ENCODE measurements at regions of chr2 and their contacts with region 1.

Region 1: DNA sequence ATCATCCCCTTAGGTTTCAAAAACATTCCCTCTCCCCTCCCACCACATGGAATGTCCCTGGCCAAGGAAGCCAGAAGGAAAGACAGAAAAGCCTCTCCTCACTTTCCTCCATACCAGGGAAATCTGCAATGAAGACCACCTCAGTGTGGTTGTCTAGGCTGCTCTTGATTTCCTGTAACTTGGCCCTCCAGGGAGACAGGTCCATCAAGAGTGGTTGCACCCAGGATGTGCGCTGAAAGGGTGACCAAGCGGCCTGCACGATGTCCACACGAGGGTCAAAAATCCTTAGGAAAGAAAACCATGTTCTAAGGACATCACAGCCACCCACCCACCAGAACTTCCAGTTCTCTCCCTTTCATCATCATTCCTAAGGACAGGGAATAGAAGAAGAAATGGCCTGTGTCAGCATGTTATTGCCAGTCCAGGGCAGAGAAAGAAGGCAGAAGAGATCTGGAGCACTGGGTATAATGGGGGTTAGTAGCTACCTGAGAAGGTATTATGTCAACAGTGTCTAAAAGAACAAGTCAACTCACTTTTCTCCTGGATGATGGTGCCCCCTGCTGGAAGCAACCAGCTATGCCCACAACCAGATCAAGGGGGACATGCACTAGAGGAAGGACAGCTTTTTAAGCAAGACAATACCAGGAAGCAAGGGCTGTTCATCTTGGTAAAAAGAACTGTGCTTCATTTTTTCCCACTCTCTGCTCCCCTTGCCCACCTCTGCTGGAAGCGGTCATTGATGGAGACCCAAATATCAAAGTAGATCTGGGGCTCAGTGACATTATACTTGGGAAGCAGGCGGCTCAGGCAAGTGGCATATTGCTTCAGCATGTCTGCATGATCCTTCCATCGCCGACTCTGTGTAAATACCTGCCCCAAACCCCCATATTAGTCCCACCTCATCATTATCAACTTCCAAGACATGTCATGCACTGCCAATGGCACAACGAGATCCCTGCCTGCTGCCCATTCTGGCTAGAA is 9.3 kb downstream of the GGCX start:
- DNase-seq: peak; percentile 91
- ATAC-seq: peak; percentile 77
- H3K4me3 Mint-ChIP-seq: no peak overlapping the region
- H3K27ac Mint-ChIP-seq: no peak overlapping the region
- H3K4me1 Mint-ChIP-seq: peaks cover 5% of the 10 kb centered on the region
- H3K27me3 Mint-ChIP-seq: no peaks in the 10 kb centered on the region
- CTCF ChIP-seq: peak; percentile 88

Region 2: DNA sequence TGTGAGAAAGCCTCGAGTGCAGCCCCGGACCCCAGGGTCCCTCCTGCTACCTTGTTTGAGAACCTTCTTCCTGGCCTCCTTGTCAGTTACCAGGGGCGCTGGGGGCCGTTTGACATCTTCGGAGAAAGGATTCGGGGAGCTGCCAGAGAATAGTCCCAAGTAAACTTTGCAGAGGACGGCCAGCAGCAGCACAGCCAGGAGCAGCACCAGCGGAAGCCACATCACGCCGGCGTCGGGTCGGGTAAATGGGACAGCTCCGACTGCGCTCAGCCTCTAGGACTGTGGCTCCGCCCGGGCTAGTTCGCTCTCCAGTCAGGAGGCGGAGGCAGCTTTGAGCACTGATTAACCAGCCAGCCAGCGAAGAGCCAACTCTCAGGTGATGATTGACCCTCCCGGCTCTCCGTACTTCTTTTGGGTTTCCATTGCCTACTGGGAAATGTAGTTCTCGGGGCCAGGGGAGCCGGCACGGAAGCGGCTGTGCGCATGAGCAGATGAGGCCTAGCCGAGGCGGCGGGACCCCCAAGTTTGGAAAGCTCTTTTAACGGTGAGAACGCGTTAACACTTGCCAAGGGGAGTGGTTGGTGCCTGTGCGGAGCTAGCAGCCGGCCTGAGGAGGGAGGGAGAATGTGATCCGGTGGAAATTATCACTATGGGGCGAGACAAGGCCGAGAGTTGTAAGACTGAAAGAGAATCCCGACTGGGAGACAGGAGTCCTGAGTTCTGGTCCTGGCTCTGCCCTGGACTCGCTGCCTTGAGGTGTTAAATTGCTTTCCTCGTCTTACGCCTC is 197.5 kb before region 1 on chr2 and contains the starts of genes ELMOD3 and RETSAT:
- CTCF ChIA-PET with region 1: interaction called, 10 read pairs
- POLR2A ChIA-PET with region 1: no interaction called
- DNase-seq: peak; percentile 95
- ATAC-seq: peak; percentile 99
- H3K4me3 Mint-ChIP-seq: peak within 1 kb of the TSS; percentile 100
- H3K27ac Mint-ChIP-seq: peak within 1 kb of the TSS; percentile 96
- H3K4me1 Mint-ChIP-seq: peaks cover 16% of the 10 kb centered on the region
- H3K27me3 Mint-ChIP-seq: no peaks in the 10 kb centered on the region
- CTCF ChIP-seq: no peak
- total RNA-seq, gene ELMOD3: 9.7 to 10.8 TPM (median 10.6 TPM) in 3 replicates
- total RNA-seq, gene RETSAT: 18.9 to 24.4 TPM (median 21.6 TPM) in 3 replicates

Region 3: GRCh38 chr2:85390941-85391669 is 160.9 kb before region 1 on chr2:
- CTCF ChIA-PET with region 1: interaction called, 66 read pairs
- POLR2A ChIA-PET with region 1: no interaction called
- DNase-seq: peak; percentile 94
- ATAC-seq: peak; percentile 89
- H3K4me3 Mint-ChIP-seq: no peak overlapping the region
- H3K27ac Mint-ChIP-seq: no peak overlapping the region
- H3K4me1 Mint-ChIP-seq: peaks cover 22% of the 10 kb centered on the region
- H3K27me3 Mint-ChIP-seq: no peaks in the 10 kb centered on the region
- CTCF ChIP-seq: peak; percentile 72

Region 4: DNA sequence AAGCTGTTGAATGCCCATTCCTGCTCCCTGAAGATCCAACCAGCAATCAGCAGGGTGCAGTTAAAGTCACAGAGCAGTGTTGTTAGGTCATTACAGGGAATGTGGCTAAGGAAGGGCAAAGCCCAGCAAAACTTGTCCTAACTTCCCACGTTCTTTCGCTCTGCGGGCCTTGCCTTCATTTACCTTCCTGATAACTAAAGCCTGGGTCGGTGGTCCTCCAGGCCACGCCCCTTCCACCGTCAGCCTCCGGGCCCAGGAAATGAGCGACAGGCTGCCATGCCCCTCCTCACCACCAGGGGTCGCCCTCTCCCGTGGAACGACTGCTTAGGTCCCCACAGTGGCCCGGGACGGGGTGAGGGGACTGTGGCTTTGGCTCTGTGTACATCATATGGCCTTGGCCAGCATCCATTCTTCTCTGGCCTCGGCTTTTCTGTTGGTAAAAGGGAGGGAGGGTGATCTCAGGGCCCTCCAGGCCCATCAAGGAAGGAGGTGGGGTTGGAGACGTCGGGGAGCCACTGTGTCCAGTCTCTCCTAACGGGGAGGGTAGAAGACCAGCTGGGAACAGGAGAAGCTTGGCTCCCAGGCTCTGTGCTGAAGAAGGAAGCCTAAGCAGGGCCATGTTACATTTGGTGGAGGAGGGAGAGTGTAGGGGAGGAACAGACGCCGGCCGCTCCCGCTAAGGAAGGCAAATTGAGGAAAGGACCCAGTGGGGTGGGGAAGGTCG is 131.3 kb before region 1 on chr2:
- CTCF ChIA-PET with region 1: interaction called, 106 read pairs
- POLR2A ChIA-PET with region 1: interaction called, 15 read pairs
- DNase-seq: peak; percentile 95
- ATAC-seq: peak; percentile 63
- H3K4me3 Mint-ChIP-seq: peak overlapping the region; percentile 35
- H3K27ac Mint-ChIP-seq: peak overlapping the region; percentile 61
- H3K4me1 Mint-ChIP-seq: peaks cover 31% of the 10 kb centered on the region
- H3K27me3 Mint-ChIP-seq: no peaks in the 10 kb centered on the region; the same call in 1 of the 2 replicates
- CTCF ChIP-seq: peak; percentile 100

Region 5: DNA sequence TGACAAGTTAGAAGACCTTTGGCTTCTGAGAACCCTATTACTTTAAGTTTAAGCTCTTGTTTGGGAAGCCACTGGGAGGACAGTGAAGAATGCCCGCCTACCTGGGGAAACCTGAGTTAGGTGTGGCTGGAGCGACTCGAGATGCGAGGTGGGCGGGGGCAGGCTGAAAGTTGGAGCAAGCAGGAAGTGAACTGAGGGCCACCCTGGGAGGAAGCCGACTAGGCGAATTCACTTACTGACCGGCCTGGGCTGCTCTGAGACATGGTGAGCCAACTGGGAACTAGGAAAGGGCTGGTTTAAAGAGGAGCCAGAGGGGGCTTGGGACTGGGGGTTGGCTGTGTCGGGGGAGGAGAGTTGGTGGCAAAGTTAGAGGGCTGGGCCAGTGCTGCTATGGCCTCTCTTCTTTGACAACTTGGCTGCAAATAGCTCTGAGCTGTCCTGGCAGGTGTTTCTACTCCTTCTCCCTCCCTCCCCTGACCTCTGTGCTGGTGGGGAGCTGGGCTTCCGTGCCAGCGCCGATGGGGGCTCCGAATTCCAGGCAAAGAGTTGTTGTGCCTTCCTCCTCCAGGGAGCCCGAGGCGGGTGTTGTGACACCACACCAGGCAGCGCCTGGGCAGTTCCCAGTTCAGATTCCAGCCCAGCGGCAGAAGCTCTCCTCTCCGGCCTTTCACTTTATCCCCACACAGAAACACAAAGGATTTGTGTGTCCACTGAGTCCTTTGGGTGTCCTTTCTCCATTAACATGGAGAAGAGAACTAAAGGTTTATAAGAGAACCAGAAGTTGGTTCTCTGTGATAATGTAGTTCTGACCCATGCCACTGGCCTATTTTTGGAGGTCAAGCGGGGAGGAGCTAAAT is 25.6 kb after region 1 on chr2 and contains the start of gene VAMP8:
- CTCF ChIA-PET with region 1: interaction called, 12 read pairs
- POLR2A ChIA-PET with region 1: interaction called, 5 read pairs
- DNase-seq: peak; percentile 84
- ATAC-seq: peak; percentile 91
- H3K4me3 Mint-ChIP-seq: peak within 1 kb of the TSS; percentile 79
- H3K27ac Mint-ChIP-seq: peak within 1 kb of the TSS; percentile 64
- H3K4me1 Mint-ChIP-seq: peaks cover 35% of the 10 kb centered on the region
- H3K27me3 Mint-ChIP-seq: peaks cover 15% of the 10 kb centered on the region
- CTCF ChIP-seq: no peak
- total RNA-seq, gene VAMP8: 48.8 to 55.4 TPM (median 52.0 TPM) in 3 replicates

Region 6: DNA sequence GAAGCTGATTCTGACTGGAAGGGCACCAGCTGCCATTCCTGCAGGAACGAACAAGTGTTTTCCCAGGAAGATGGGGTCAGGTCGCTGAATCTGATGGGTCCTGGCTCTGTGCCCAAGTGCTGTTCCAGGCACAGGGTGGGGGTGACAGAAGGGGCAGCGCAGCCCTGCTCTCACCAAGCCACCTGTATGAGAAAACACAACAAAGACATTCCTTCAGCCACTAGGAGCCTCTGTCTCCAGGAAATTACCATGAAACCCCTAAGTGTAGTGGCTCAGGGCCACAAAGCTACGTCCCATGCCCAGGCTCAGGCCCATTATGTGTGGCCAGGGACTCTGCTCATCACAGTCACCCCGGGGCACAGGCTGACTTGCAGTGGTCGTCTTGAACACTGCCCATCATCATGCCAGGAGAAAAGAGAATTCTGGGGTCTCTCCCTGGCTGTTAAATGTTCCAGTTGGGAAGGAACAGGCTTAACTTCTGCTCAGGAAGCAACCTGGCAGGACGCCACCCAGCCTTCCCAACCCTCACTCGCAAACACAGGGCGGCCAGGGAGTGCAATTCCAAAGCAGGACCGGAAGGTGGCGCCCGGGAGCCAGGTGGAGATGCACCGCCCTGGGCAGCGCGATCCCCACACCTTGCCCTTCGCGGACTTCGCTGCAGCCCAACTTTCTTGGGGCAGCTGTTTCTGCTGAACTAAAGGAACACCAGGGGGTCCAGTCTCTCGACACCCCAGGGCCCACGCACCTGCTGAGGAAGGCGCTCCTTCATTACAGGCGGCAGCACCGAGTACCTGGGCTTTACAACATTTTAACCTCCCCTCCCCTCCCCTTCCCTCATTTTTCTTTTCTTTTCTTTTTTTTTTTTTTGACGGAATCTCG is 127.0 kb after region 1 on chr2:
- CTCF ChIA-PET with region 1: no interaction called
- POLR2A ChIA-PET with region 1: no interaction called
- DNase-seq: peak; percentile 92
- ATAC-seq: peak; percentile 96
- H3K4me3 Mint-ChIP-seq: no peak overlapping the region; the same call in 1 of the 2 replicates
- H3K27ac Mint-ChIP-seq: no peak overlapping the region
- H3K4me1 Mint-ChIP-seq: peaks cover 12% of the 10 kb centered on the region
- H3K27me3 Mint-ChIP-seq: peaks cover 5% of the 10 kb centered on the region
- CTCF ChIP-seq: peak; percentile 96

Region 7: DNA sequence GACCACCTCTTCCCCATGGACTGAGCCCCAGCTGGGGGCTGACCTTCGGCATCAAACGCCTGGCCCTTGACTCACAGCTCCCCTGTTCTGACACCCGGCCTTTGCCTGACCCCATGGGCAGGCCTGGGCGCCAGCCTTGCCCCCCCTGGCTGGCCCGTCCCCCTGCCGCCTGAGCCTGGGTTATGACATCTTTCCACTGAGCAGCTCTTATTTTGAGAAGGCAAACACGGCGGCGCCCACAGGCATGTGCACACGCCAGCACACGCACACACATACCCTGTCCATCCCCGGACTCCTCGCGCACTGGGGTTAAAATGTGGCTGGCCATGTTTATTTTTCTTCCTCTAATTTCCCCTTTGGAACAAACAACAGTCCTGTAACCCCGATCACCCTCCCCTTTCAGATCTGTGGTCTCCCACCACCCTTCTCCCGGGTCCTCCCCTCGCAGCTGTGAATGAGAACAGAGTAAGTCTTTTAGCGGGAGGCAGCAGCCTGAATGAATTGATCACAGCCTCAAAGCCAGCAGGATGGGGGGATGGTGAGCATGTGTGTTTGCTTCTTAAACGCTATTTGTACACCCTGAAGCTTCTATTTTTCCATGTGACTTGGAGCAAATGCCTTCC is 190.0 kb after region 1 on chr2:
- CTCF ChIA-PET with region 1: no interaction called
- POLR2A ChIA-PET with region 1: no interaction called
- DNase-seq: no peak
- ATAC-seq: no peak
- H3K4me3 Mint-ChIP-seq: no peak overlapping the region
- H3K27ac Mint-ChIP-seq: no peak overlapping the region
- H3K4me1 Mint-ChIP-seq: peaks cover 7% of the 10 kb centered on the region
- H3K27me3 Mint-ChIP-seq: peaks cover 10% of the 10 kb centered on the region
- CTCF ChIP-seq: no peak